CD4-positive, alpha-beta memory T cell (primary cell): ENCODE measurements at regions of chr6 and their contacts with region 1.

Region 1: DNA sequence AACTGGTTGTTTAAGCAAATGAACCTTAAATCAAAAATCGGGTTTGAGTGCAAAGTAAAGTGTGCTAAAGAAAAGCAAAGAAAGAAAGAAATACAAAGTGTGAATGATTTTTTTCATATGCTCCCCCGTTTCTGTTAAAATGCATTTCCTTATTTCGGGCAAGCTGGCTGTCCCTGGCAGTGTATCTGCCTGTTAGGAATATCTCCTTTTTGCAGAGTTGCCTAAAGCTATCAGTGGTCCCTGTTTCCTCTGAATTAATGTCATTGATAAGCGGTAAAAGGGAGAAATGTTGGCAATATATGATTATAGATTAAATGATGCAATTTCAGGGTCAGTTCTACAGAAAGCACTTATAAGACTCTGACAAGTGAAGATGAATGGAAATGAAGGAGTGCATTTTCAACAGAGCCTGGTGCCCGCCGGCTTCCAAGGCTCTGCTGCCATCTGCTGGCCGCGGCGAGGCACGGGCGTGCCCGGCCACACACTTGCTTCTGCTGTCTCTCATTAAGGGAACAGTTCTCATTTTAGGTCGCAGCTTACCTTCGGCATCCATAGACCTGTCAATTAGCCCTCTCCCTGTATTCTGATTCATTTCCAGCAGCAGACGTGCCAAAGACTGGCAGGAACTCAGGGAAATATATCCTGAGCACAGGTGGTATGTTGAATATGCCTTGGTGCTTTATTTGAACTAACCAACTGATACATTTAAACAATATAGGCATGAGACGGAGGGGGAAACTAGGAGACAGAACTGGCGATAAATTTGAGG is 381.9 kb downstream of the C6orf118 start:
- DNase-seq: peak in 4 of 5 donors; percentile 35 to 54 (median 38)
- H3K4me3 ChIP-seq: no peak overlapping the region
- H3K4me3 Mint-ChIP-seq: no peak overlapping the region
- H3K27ac ChIP-seq: no peak overlapping the region
- H3K27ac Mint-ChIP-seq: no peak overlapping the region
- H3K4me1 ChIP-seq: no peaks in the 10 kb centered on the region
- H3K4me1 Mint-ChIP-seq: no peaks in the 10 kb centered on the region
- H3K27me3 ChIP-seq: no peaks in the 10 kb centered on the region
- H3K27me3 Mint-ChIP-seq: no peaks in the 10 kb centered on the region

Region 2: GRCh38 chr6:164151161-164151728 is 776.2 kb before region 1 on chr6:
- CTCF ChIA-PET with region 1: no interaction called
- POLR2A ChIA-PET with region 1: no interaction called
- intact Hi-C with region 1: no loop called
- DNase-seq: no peak
- H3K4me3 ChIP-seq: no peak overlapping the region
- H3K4me3 Mint-ChIP-seq: no peak overlapping the region
- H3K27ac ChIP-seq: no peak overlapping the region
- H3K27ac Mint-ChIP-seq: no peak overlapping the region
- H3K4me1 ChIP-seq: no peaks in the 10 kb centered on the region
- H3K4me1 Mint-ChIP-seq: no peaks in the 10 kb centered on the region
- H3K27me3 ChIP-seq: no peaks in the 10 kb centered on the region
- H3K27me3 Mint-ChIP-seq: peaks cover 0 to 2% of the 10 kb centered on the region in 2 donors

Region 3: GRCh38 chr6:164942271-164942765 is 14.8 kb after region 1 on chr6:
- CTCF ChIA-PET with region 1: interaction called, 11 read pairs
- POLR2A ChIA-PET with region 1: no interaction called
- intact Hi-C with region 1: no loop called
- DNase-seq: no peak
- H3K4me3 ChIP-seq: no peak overlapping the region
- H3K4me3 Mint-ChIP-seq: no peak overlapping the region
- H3K27ac ChIP-seq: no peak overlapping the region
- H3K27ac Mint-ChIP-seq: no peak overlapping the region
- H3K4me1 ChIP-seq: no peaks in the 10 kb centered on the region
- H3K4me1 Mint-ChIP-seq: no peaks in the 10 kb centered on the region
- H3K27me3 ChIP-seq: no peaks in the 10 kb centered on the region
- H3K27me3 Mint-ChIP-seq: no peaks in the 10 kb centered on the region